Lower leg skin (tissue), 4 donors: ENCODE measurements at regions of chr7 and their contacts with region 1.

Region 1: DNA sequence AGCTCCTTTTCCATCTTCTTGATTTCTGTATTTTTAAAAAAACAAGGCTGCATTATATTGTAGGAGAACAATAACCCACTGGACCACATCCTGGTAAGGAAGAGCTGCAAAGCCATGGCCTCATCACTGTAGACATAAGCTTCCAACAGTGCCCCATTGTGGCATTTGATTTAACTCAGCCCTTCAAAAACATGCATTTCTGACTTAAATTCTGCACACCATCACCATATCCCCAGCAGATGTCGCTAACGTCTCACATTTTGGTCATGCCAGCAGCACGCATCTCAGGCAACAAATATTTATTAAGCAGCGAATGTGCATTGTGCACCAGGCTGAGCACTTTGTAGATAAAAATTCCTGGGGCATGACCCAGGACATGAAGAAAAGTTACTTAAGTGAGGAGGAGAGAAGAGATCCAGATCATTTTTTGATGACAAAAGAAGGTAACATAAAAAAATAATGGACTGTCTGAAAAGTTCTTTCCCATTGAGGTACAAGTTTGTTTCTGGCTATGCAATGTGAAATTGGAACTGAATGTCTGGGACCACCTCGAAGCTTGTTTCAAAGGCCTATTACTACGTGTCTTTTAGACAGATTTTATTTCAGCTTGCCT is 164.6 kb upstream of the CDCA7L start:
- DNase-seq: peak; percentile 76 to 89
- H3K4me3 ChIP-seq: no peak overlapping the region
- CTCF ChIP-seq: peak in 1 of 3 donors; percentile 76
- POLR2A ChIP-seq: no peak

Region 2: DNA sequence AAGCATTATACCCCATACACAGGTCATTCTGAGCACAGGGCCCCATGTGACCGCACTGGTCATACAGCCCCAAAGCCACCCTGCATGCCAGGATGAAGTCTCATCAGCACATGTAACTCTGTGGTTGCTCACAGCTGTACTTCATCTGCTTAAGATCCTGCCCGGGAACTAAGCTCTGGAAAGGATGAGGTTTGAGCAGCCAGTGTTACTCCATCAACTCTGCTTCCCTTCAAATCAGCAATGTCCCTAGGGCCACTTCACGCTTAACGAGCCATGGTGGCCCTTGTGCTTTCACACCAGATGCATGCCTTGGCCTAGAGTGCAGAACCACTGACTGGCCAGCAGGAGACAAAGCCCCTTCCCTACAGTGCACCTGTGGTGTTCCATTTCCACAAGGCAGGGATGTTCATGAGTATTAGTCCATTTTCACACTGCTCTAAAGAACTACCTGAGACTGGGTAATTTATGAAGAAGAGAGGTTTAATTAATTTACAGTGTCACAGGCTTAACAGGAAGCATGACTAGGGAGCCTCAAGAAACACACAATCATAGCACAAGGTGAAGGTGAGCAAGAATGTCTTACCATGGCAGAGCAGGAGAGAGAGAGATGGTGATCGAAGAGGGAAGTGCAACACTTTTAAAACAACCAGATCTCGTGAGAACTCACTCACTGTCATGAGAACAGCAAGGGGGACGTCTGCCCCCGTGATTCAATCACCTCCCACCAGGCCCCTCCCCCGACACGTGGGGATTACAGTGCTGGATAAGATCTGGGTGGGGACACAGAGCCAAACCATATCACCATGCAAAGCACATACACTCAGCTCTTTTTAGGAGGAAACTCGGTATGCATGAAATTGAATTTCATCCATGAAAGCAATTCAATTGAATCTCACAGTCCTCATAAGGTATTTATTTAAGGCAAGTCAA is 15.7 kb before region 1 on chr7:
- intact Hi-C with region 1: no loop called
- DNase-seq: no peak
- H3K4me3 ChIP-seq: no peak overlapping the region
- CTCF ChIP-seq: no peak
- POLR2A ChIP-seq: no peak

Region 3: DNA sequence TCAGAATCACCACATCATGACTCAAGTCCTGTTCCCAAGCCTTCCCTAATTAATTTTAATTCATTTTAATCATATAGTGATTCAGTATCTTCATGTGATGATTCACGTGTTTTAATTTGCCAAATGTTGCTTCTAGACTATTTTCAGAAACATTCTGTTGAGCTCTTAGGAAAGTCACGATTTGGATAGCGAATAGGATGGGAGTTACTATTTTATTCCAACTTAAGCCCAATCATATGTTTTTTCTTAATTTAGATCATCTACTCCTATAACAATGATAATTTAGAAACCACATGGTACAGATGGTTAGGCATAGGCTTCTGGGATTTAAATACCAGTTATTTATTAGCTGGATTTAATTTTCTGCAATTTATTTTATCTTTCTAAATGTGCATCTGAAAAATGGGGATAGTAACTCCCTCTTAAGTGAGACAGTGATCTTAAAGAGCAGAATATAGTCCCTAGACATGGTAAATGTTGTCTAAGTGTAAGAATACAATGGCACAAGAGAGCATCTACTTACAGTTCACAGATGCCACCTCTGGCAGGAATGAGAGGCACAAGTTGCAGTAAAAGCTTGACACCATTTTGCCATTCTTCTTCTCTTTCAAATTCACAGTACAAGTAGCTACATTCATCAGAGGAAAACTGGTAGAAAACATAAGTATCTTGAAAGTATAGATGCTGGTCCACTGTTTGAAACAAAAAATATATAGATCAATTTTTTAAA is 197.6 kb after region 1 on chr7:
- intact Hi-C with region 1: no loop called
- DNase-seq: no peak
- H3K4me3 ChIP-seq: no peak overlapping the region
- CTCF ChIP-seq: no peak
- POLR2A ChIP-seq: no peak

Region 4: GRCh38 chr7:22488643-22489462 is 378.5 kb after region 1 on chr7:
- intact Hi-C with region 1: loop called (anchors 5 kb)
- DNase-seq: peak; percentile 57 to 93
- H3K4me3 ChIP-seq: no peak overlapping the region
- CTCF ChIP-seq: peak in 1 of 3 donors; percentile 56
- POLR2A ChIP-seq: no peak